SK-N-SH (cell line): ENCODE measurements at regions of chr2 and their contacts with region 1.

Region 1: GRCh38 chr2:177983183-177983788 is 89.3 kb downstream of the PDE11A start:
- DNase-seq: peak; percentile 70
- H3K4me3 ChIP-seq: no peak overlapping the region; a peak in 1 of 4 replicates
- H3K27ac ChIP-seq: no peak overlapping the region
- H3K4me1 ChIP-seq: peaks cover 6 to 12% of the 10 kb centered on the region in 2 experiments
- H3K27me3 ChIP-seq: no peaks in the 10 kb centered on the region
- CTCF ChIP-seq: peak; percentile 96
- EP300 ChIP-seq: no peak
- RAD21 ChIP-seq: peak; percentile 90

Region 2: DNA sequence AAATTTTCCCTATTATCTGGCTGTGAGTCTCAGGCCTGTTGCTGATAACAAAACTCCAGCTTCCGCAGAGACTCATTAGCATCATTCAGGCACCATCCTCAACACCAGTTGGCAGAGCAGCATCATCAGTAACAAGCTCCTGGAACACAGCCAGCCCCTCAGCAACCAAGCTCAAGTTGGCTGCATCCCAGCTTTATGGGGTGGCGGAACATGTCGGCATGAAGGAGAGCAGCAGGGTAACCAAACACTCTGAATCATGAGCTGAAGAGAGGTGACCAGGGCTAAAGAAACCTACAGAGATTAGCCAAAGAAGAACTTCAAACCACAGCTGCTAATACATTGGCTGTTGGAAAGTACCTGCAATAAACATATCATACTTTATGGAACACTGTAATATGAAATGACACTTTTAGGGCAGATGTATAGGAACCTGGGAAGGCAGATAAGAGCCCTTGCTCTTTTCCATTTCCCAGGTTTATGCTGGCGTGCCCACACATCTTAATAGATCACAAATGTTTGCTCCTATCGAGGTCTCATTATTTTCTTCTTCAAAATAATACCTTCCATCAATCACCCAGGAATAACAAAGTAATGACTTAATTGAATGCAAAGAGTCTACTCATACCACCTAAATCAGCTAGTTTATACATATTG is 25.5 kb after region 1 on chr2:
- CTCF ChIA-PET with region 1: interaction called, 14 read pairs
- POLR2A ChIA-PET with region 1: no interaction called
- DNase-seq: peak; percentile 65
- H3K4me3 ChIP-seq: no peak overlapping the region
- H3K27ac ChIP-seq: peak overlapping the region; percentile 39 to 95
- H3K4me1 ChIP-seq: peaks cover 17 to 20% of the 10 kb centered on the region in 2 experiments; a peak in 3 of 4 replicates
- H3K27me3 ChIP-seq: no peaks in the 10 kb centered on the region
- CTCF ChIP-seq: no peak
- EP300 ChIP-seq: peak; percentile 52 to 74; a peak in 3 of 4 replicates
- RAD21 ChIP-seq: peak; percentile 25; the same call in 1 of the 2 replicates

Region 3: GRCh38 chr2:178025551-178026185 is 42.4 kb after region 1 on chr2:
- CTCF ChIA-PET with region 1: no interaction called
- POLR2A ChIA-PET with region 1: no interaction called
- DNase-seq: no peak
- H3K4me3 ChIP-seq: no peak overlapping the region
- H3K27ac ChIP-seq: no peak overlapping the region
- H3K4me1 ChIP-seq: no peaks in the 10 kb centered on the region
- H3K27me3 ChIP-seq: no peaks in the 10 kb centered on the region
- CTCF ChIP-seq: no peak
- EP300 ChIP-seq: no peak
- RAD21 ChIP-seq: no peak

Region 4: DNA sequence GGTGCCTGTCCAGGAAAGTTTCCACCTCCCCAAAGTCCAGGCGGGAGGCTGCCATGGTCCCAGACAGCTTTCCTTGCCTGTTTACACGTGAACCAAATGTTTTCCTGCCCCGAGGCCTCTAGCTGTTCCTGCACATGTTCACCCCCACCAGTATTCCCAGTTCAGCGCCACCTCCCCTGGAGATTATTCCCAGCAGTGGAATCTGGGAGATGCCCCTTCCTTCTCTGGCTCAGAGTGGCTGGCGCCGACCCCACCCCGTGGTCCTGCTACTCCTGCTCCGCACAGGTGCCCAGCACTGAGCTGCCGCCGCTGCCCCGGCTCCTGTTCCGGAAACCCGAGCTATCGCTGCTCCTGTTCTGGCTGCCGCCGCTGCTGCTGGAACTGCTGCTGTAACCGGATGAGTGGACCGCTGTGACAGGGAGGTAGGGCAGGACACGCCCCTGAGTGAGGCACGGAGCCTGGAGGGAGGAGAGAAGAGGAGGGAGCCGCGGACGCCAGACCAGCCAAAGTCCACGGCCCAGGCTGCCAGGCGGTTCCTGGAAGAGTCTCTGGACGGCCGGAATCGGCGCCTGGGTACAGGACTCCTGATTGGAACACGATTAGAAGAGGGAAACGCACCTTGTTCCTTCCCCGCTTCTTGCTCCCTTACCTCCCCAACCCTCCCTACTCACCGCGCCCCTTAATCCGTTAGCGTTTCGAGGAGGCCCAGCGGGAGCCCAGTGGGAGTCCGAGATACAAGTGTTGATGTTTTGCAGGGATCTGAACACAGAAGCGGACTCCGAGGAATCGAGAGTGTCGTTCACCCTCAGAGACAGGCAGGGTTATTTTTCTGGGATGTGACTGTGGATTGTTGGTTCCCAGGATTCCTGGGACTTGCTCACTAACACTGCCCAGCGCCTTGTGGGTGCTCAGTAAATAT is 89.4 kb after region 1 on chr2 and contains the start of gene PDE11A:
- CTCF ChIA-PET with region 1: interaction called, 22 read pairs
- POLR2A ChIA-PET with region 1: interaction called, 4 read pairs
- DNase-seq: peak; percentile 87
- H3K4me3 ChIP-seq: peak within 1 kb of the TSS; percentile 59 to 67
- H3K27ac ChIP-seq: peak within 1 kb of the TSS; percentile 31 to 92
- H3K4me1 ChIP-seq: peaks cover 8 to 17% of the 10 kb centered on the region in 2 experiments; a peak in 3 of 4 replicates
- H3K27me3 ChIP-seq: no peaks in the 10 kb centered on the region
- CTCF ChIP-seq: no peak
- EP300 ChIP-seq: peak in 1 of 2 experiments; percentile 26; a peak in 1 of 4 replicates
- RAD21 ChIP-seq: 0 out of 2 replicates have a peak, but pooled peaks have one; percentile 4
- polyA plus RNA-seq, gene PDE11A: 0.10 and 0.18 TPM in 2 replicates